ENCODE measurements at regions of chr2 and their contacts with region 1.

Region 1: GRCh38 chr2:165149439-165149838 is 54.4 kb downstream of the SCN3A start:
- DNase-seq: no peak
- ATAC-seq: peak; percentile 42
- H3K4me3 Mint-ChIP-seq: no peak overlapping the region
- H3K27ac Mint-ChIP-seq: no peak overlapping the region
- H3K4me1 Mint-ChIP-seq: peaks cover 18% of the 10 kb centered on the region
- H3K27me3 Mint-ChIP-seq: no peaks in the 10 kb centered on the region
- CTCF ChIP-seq: no peak

Region 2: GRCh38 chr2:165193178-165193777 is 43.8 kb after region 1 on chr2:
- CTCF ChIA-PET with region 1: no interaction called
- POLR2A ChIA-PET with region 1: no interaction called
- intact Hi-C with region 1: loop called (anchors 5 kb)
- DNase-seq: peak; percentile 15
- ATAC-seq: peak; percentile 93
- H3K4me3 Mint-ChIP-seq: peak overlapping the region; percentile 29
- H3K27ac Mint-ChIP-seq: peak overlapping the region; percentile 57
- H3K4me1 Mint-ChIP-seq: peaks cover 68% of the 10 kb centered on the region
- H3K27me3 Mint-ChIP-seq: no peaks in the 10 kb centered on the region
- CTCF ChIP-seq: no peak